ENCODE measurements at regions of chr11 and their contacts with region 1.

Region 1: GRCh38 chr11:132941024-132941646 is 591.2 kb downstream of the OPCML start:
- DNase-seq: no peak
- ATAC-seq: no peak
- H3K4me3 ChIP-seq: no peak overlapping the region
- H3K27ac ChIP-seq: no peak overlapping the region
- H3K4me1 ChIP-seq: no peaks in the 10 kb centered on the region
- H3K27me3 ChIP-seq: peaks cover 5 to 7% of the 10 kb centered on the region in 2 experiments; a peak in 3 of 4 replicates
- CTCF ChIP-seq: peak; percentile 54 to 81 (median 78)
- EP300 ChIP-seq: no peak
- POLR2A ChIP-seq: no peak
- RAD21 ChIP-seq: peak; percentile 59

Region 2: DNA sequence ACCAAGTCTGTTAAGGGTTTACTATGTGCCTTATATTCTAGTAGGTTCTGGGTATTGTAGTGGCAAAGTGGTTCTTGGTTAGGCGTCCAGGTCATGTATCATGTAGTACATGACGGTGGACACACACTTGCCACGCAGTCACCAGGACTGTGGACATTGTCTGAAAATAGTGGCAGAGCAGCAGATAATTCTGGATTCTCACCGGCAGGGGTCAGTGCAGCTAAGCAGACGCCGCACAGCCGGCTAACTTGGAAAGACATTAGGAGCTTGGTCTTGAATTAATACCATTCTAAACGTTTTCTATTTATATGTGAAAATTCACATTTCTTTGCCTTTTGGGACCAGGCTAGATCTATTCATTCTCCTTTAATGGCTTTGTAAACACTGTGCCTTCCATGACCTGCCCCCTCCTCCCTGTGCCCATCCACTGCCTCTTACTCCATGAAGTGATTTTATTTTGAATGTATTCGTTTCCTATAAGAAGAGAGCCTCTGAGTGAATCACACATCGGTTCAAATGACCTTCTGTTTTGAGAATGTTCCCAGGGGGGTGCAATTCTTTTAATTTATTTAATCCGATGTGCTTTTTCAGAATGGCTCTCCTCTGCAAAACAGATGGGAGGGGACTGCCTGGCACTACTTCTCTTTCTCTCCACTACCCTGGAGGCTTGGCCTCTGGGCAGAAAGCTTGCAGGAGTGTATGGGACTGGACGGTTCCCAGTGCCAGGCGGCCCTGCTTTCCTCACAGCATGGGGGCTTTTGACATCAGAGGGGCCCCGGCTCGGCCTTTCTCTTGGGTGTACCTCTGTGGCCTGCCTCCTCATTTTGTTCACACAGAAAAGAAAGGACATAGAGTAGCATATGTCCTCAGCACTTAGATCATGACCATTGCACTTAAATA is 1192.7 kb before region 1 on chr11:
- CTCF ChIA-PET with region 1: interaction called, 12 read pairs
- POLR2A ChIA-PET with region 1: no interaction called
- RAD21 ChIA-PET with region 1: no interaction called
- SMC1A ChIA-PET with region 1: no interaction called
- in situ Hi-C with region 1: no loop called
- intact Hi-C with region 1: no loop called
- DNase-seq: no peak
- ATAC-seq: peak; percentile 92
- H3K4me3 ChIP-seq: no peak overlapping the region
- H3K27ac ChIP-seq: no peak overlapping the region
- H3K4me1 ChIP-seq: no peaks in the 10 kb centered on the region
- H3K27me3 ChIP-seq: no peaks in the 10 kb centered on the region; a peak in 3 of 4 replicates
- CTCF ChIP-seq: peak; percentile 77 to 79 (median 77)
- EP300 ChIP-seq: no peak
- POLR2A ChIP-seq: no peak
- RAD21 ChIP-seq: peak; percentile 63

Region 3: DNA sequence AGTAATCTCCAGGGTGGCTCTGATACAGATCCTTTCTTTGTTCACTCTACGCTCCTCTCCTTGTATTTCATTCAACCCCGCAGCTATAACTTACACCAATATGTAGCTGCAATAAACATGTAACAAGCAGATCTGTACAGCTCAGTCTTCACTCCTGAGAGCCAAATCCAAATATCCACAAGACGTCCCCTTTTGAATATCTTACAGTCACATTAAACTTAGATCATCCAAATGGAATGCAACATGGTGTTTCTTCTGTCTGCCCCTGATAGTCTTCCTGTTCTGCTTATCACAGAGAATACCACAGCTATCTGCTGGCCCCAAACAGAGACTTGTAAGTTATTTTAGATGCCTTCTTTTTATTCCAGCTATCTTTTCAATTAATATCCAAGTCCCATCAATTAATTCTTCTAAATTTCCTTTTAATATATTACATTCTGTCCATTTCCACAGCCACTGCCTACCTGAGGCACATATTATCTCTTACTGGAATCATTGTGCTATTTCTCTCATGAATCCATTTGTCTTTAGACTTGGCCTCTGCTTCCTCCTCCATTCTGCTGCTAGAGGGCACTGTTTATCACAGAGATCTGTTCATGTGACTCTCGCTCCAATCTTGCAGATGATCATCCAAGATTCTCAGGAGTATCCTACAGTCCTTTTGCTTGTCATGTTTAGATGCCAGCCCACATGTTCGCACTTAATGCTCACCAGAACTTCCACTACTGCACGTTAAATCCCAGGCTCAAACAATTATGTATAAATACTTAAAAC is 662.1 kb before region 1 on chr11:
- CTCF ChIA-PET with region 1: interaction called, 17 read pairs
- POLR2A ChIA-PET with region 1: no interaction called
- RAD21 ChIA-PET with region 1: interaction called, 4 read pairs
- SMC1A ChIA-PET with region 1: interaction called, 12 read pairs
- in situ Hi-C with region 1: no loop called
- intact Hi-C with region 1: loop called (anchors 5 kb)
- DNase-seq: peak; percentile 4
- ATAC-seq: peak; percentile 90
- H3K4me3 ChIP-seq: no peak overlapping the region
- H3K27ac ChIP-seq: no peak overlapping the region
- H3K4me1 ChIP-seq: no peaks in the 10 kb centered on the region
- H3K27me3 ChIP-seq: no peaks in the 10 kb centered on the region
- CTCF ChIP-seq: peak; percentile 60 to 71 (median 64)
- EP300 ChIP-seq: no peak
- POLR2A ChIP-seq: no peak
- RAD21 ChIP-seq: peak; percentile 89

Region 4: DNA sequence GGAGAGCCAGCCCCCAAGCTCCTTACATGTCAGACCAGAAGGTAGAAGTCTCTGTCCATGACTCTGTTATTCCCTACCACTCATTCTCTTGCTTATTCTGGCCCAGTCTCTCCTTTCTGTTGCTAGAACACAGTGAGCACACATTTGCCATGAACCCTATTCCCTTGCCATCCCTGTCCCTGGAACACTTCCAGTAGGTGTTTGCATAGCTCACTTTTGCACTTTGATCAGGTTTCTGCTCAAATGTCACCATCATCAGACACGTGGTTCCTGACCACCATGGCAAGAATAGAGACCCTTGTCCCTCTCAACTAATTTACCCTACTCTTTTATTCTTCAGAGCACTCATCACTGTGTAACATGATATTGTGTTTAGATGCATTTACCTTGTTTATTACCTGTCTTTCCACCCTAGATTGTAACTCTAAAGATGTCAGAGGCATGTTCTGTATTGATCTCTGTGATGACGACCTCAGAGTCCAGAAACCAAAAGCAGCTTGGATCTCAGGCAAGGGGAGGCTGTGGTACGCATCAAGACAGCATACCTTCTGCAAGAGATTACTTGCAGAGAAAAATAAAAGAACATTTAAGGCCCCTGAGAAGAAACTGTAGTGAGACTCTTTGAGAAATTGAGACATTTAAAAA is 15.2 kb before region 1 on chr11:
- CTCF ChIA-PET with region 1: interaction called, 13 read pairs
- POLR2A ChIA-PET with region 1: no interaction called
- RAD21 ChIA-PET with region 1: no interaction called
- SMC1A ChIA-PET with region 1: interaction called, 3 read pairs
- in situ Hi-C with region 1: no loop called
- intact Hi-C with region 1: no loop called
- DNase-seq: no peak
- ATAC-seq: no peak
- H3K4me3 ChIP-seq: no peak overlapping the region
- H3K27ac ChIP-seq: no peak overlapping the region
- H3K4me1 ChIP-seq: no peaks in the 10 kb centered on the region
- H3K27me3 ChIP-seq: no peaks in the 10 kb centered on the region
- CTCF ChIP-seq: no peak
- EP300 ChIP-seq: no peak
- POLR2A ChIP-seq: no peak
- RAD21 ChIP-seq: no peak

Region 5: GRCh38 chr11:132962041-132962440 is 20.9 kb after region 1 on chr11:
- CTCF ChIA-PET with region 1: interaction called, 26 read pairs
- POLR2A ChIA-PET with region 1: no interaction called
- RAD21 ChIA-PET with region 1: no interaction called
- SMC1A ChIA-PET with region 1: interaction called, 3 read pairs
- in situ Hi-C with region 1: no loop called
- intact Hi-C with region 1: no loop called
- DNase-seq: no peak
- ATAC-seq: peak; percentile 76
- H3K4me3 ChIP-seq: no peak overlapping the region
- H3K27ac ChIP-seq: no peak overlapping the region
- H3K4me1 ChIP-seq: no peaks in the 10 kb centered on the region
- H3K27me3 ChIP-seq: no peaks in the 10 kb centered on the region
- CTCF ChIP-seq: no peak
- EP300 ChIP-seq: no peak
- POLR2A ChIP-seq: no peak
- RAD21 ChIP-seq: no peak

Region 6: DNA sequence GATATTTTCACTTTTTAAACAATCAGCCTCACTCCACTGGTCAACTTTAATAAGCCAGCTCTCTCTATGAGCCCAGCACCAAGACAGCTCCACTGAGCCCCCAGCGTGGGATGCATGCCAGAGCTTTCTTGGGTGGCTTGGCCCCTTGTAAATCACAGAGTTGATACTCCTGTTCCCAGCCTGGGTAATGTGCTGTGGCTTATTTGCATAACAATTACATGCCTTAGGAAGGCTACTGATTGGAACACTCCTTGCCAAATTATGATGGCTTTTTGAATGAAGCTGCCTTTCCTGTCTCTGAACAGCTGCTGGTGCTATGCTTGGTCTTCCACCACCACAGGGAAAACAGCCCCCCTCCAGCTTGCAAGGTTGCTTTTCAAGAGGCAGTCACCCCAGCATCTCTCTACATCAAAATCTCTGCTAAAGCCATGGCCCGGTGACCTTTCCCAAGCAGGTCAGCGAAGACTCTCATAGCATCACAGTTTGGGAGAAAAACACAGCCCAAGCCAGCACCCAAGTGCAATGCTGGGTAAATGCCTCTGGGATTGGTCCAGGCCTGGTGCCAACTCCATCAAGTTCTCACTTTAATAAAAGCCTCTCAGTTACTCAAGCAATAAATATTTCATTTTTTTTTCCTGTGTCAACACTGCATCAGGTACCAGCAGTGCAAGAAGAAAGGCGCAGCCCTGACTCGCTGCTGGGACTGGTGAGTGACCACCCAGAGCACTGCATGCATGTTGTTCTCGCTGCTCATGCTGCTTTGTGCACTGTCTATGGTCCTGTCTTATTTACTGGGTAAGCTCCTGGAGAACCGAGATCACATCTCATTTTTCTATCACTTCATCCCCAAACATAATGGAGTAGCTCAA is 41.9 kb after region 1 on chr11:
- CTCF ChIA-PET with region 1: interaction called, 10 read pairs
- POLR2A ChIA-PET with region 1: no interaction called
- RAD21 ChIA-PET with region 1: no interaction called
- SMC1A ChIA-PET with region 1: interaction called, 3 read pairs
- in situ Hi-C with region 1: no loop called
- intact Hi-C with region 1: no loop called
- DNase-seq: no peak
- ATAC-seq: no peak
- H3K4me3 ChIP-seq: no peak overlapping the region
- H3K27ac ChIP-seq: no peak overlapping the region
- H3K4me1 ChIP-seq: no peaks in the 10 kb centered on the region
- H3K27me3 ChIP-seq: no peaks in the 10 kb centered on the region; a peak in 1 of 4 replicates
- CTCF ChIP-seq: no peak
- EP300 ChIP-seq: no peak
- POLR2A ChIP-seq: no peak
- RAD21 ChIP-seq: no peak

Region 7: GRCh38 chr11:132992838-132993631 is 51.9 kb after region 1 on chr11:
- CTCF ChIA-PET with region 1: interaction called, 4 read pairs
- POLR2A ChIA-PET with region 1: no interaction called
- RAD21 ChIA-PET with region 1: interaction called, 3 read pairs
- SMC1A ChIA-PET with region 1: interaction called, 4 read pairs
- in situ Hi-C with region 1: no loop called
- intact Hi-C with region 1: loop called (anchors 5 kb)
- DNase-seq: no peak
- ATAC-seq: no peak
- H3K4me3 ChIP-seq: no peak overlapping the region
- H3K27ac ChIP-seq: no peak overlapping the region
- H3K4me1 ChIP-seq: no peaks in the 10 kb centered on the region
- H3K27me3 ChIP-seq: no peaks in the 10 kb centered on the region; a peak in 3 of 4 replicates
- CTCF ChIP-seq: no peak
- EP300 ChIP-seq: no peak
- POLR2A ChIP-seq: no peak
- RAD21 ChIP-seq: no peak

Measured in GM12878 (cell line).